Activated CD8-positive, alpha-beta T cell treated with anti-CD3 and anti-CD28 coated beads for 36 hours (primary cell): ENCODE measurements at regions of chr16 and their contacts with region 1.

Region 1: DNA sequence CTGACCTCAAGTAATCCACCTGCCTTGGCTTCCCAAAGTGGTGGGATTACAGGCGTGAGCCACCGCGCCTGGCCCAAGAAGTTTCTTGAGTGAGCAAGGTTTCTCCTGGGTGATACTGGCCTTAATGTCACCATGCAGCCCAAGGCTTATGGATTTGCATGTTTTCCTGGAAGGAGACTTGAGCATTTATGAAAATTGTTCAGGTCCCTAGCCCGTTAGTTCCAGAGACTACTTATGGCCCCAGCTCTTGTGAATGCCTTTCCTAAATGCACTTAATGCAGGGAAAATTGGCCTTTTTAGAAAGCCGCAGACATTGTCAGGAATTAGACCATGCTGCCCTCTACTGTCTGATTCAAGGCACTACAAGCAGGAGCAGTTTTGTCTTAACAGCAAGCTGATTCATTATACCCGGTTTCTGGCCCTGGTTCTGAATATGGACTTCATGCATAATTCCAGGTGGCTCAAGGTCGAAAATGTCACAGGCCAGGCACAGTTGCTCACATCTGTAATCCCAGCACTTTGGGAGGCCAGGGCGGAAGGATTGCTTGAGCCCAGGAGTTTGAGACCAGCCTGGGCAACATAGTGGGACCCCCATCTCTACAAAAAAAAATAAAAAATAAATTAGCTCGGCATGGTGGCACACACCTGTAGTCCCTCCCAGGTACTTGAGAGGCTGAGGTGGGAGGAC is 91.3 kb downstream of the SNX29 start:
- DNase-seq: peak; percentile 53
- ATAC-seq: peak; percentile 87
- H3K4me3 Mint-ChIP-seq: no peak overlapping the region
- H3K27ac Mint-ChIP-seq: no peak overlapping the region
- H3K4me1 Mint-ChIP-seq: no peaks in the 10 kb centered on the region
- H3K27me3 Mint-ChIP-seq: no peaks in the 10 kb centered on the region
- CTCF ChIP-seq: peak; percentile 96

Region 2: GRCh38 chr16:11949527-11949926 is 118.3 kb before region 1 on chr16:
- CTCF ChIA-PET with region 1: interaction called, 27 read pairs
- POLR2A ChIA-PET with region 1: no interaction called
- intact Hi-C with region 1: loop called (anchors 5 kb)
- DNase-seq: peak; percentile 36
- ATAC-seq: peak; percentile 70
- H3K4me3 Mint-ChIP-seq: no peak overlapping the region
- H3K27ac Mint-ChIP-seq: no peak overlapping the region
- H3K4me1 Mint-ChIP-seq: no peaks in the 10 kb centered on the region
- H3K27me3 Mint-ChIP-seq: no peaks in the 10 kb centered on the region
- CTCF ChIP-seq: peak; percentile 49

Region 3: GRCh38 chr16:12021578-12022253 is 46.1 kb before region 1 on chr16:
- CTCF ChIA-PET with region 1: interaction called, 11 read pairs
- POLR2A ChIA-PET with region 1: no interaction called
- intact Hi-C with region 1: no loop called
- DNase-seq: no peak
- ATAC-seq: no peak
- H3K4me3 Mint-ChIP-seq: no peak overlapping the region
- H3K27ac Mint-ChIP-seq: no peak overlapping the region
- H3K4me1 Mint-ChIP-seq: peaks cover under 1% of the 10 kb centered on the region
- H3K27me3 Mint-ChIP-seq: no peaks in the 10 kb centered on the region
- CTCF ChIP-seq: no peak

Region 4: DNA sequence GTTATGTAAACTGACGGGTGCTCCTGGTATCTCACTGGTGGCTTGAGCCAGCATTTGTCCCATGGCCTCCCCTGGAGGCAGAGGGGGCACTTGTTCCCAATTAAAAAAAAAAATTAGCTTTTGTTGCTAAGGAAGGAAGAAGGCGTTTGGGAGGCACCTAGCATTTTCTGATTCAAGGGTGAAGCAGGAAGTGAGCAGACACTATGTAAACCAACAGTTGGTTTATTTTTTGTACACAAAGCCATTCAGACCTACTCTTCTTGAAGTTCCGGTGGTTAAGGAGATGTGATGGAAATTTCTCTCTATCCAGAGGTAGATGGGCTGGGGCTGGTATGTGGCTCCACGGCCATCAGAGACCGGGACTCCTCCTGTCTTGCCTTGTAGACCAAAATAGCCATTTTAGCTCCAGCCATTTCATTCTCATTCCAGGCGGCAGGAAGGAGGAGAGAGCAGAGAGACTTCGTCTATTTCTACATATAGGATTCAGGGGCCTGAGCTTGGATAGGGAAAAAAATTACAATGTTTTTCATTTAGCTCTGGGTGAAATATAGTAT is 11.6 kb after region 1 on chr16:
- CTCF ChIA-PET with region 1: interaction called, 39 read pairs
- POLR2A ChIA-PET with region 1: interaction called, 12 read pairs
- intact Hi-C with region 1: no loop called
- DNase-seq: no peak
- ATAC-seq: no peak
- H3K4me3 Mint-ChIP-seq: peak overlapping the region; percentile 72
- H3K27ac Mint-ChIP-seq: peak overlapping the region; percentile 99
- H3K4me1 Mint-ChIP-seq: peaks cover 77% of the 10 kb centered on the region
- H3K27me3 Mint-ChIP-seq: no peaks in the 10 kb centered on the region
- CTCF ChIP-seq: no peak

Region 5: DNA sequence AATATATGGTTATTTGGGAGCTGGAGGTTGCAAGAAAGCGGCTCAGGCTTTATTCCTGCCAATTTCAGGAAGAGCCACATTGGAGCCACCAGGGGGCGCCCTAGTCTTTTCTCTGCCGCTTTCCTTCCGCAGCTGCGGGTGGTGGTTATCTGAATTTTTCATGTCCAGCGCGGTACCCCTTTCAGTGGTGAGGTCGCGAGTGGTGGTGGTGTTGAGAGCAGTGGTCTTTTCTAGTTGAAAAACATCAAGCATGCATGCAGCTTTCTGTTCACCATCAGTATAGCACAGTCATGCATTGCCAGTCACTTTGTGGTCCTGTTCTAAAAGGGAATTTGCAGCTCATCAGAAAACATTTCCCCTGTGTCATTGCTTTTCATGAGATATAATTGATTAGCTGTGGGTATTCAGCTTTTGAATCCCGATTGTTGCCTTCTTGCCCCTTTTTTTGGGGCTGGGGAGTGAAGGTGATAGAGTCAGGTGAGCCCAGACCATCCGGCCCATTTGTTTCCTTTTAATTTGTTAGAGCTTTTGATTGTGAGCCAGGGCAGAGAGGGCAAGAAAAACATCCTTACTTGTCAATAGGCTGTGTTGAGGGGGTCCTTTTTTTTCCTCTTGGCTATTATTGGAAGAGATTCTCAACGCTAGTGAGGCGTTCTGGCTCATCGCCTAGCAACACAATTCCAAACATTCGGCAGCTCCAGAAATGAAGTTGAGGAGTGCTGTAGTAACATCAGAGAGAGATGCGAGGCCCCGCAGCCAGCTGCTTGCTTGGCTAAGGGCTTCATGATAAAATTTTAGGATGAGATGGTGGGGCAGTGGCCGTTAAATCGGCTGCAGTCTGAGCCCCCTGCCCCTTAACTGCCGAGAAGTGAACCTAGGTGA is 27.7 kb after region 1 on chr16:
- CTCF ChIA-PET with region 1: interaction called, 25 read pairs
- POLR2A ChIA-PET with region 1: no interaction called
- intact Hi-C with region 1: no loop called
- DNase-seq: peak; percentile 80
- ATAC-seq: peak; percentile 34
- H3K4me3 Mint-ChIP-seq: peak overlapping the region; percentile 37
- H3K27ac Mint-ChIP-seq: no peak overlapping the region
- H3K4me1 Mint-ChIP-seq: peaks cover 13% of the 10 kb centered on the region
- H3K27me3 Mint-ChIP-seq: no peaks in the 10 kb centered on the region
- CTCF ChIP-seq: peak; percentile 98

Region 6: GRCh38 chr16:12160815-12161550 is 93.1 kb after region 1 on chr16:
- CTCF ChIA-PET with region 1: no interaction called
- POLR2A ChIA-PET with region 1: no interaction called
- intact Hi-C with region 1: no loop called
- DNase-seq: no peak
- ATAC-seq: no peak
- H3K4me3 Mint-ChIP-seq: no peak overlapping the region
- H3K27ac Mint-ChIP-seq: no peak overlapping the region
- H3K4me1 Mint-ChIP-seq: peaks cover 3% of the 10 kb centered on the region
- H3K27me3 Mint-ChIP-seq: no peaks in the 10 kb centered on the region
- CTCF ChIP-seq: no peak